MCF 10A (cell line): ENCODE measurements at regions of chr1 and their contacts with region 1.

Region 1: GRCh38 chr1:235917267-235917811 is 50.6 kb upstream of the LYST start:
- DNase-seq: peak; percentile 100
- H3K4me3 Mint-ChIP-seq: peak overlapping the region; percentile 35
- H3K27ac Mint-ChIP-seq: peak overlapping the region; percentile 81
- H3K4me1 Mint-ChIP-seq: peaks cover 55% of the 10 kb centered on the region
- H3K27me3 Mint-ChIP-seq: no peaks in the 10 kb centered on the region
- CTCF ChIP-seq: no peak

Region 2: DNA sequence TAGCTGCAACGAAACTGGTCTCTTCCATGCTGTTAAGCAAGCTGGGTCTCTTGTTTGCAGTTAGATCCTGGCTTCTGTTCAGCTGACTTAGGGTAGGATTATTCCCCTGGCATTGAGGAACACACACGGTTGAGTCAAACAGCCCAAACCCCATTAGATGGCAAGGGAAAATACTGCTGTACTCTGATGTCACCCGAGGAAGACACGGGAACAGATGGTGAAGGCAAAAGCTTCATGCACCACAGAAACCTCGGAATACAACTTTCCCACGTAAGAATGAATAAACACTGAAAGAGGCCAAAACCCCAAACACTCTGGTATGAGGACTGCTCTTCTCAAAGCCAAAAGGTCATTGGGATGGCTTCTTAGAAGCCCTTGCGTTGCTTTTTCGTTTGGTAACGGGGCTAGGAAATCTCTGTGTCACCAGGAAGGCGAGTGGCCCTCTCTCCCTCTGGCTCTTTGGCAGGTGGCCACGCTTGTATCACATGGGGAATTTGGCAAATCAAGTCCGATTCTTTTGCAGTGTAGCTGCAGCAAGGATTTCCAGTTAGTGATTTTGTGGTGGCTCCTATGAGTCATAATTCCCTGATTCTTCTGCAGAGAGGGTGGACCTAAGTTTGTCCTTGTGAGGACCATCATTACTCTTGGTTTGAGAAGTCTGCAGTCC is 33.9 kb before region 1 on chr1:
- CTCF ChIA-PET with region 1: interaction called, 3 read pairs
- POLR2A ChIA-PET with region 1: interaction called, 10 read pairs
- intact Hi-C with region 1: no loop called
- DNase-seq: peak; percentile 98
- H3K4me3 Mint-ChIP-seq: peak overlapping the region; percentile 5
- H3K27ac Mint-ChIP-seq: no peak overlapping the region
- H3K4me1 Mint-ChIP-seq: peaks cover 21% of the 10 kb centered on the region
- H3K27me3 Mint-ChIP-seq: no peaks in the 10 kb centered on the region
- CTCF ChIP-seq: no peak

Region 3: GRCh38 chr1:235902638-235903542 is 14.4 kb before region 1 on chr1:
- CTCF ChIA-PET with region 1: interaction called, 14 read pairs
- POLR2A ChIA-PET with region 1: interaction called, 130 read pairs
- intact Hi-C with region 1: no loop called
- DNase-seq: peak; percentile 99
- H3K4me3 Mint-ChIP-seq: peak overlapping the region; percentile 15
- H3K27ac Mint-ChIP-seq: peak overlapping the region; percentile 61
- H3K4me1 Mint-ChIP-seq: peaks cover 44% of the 10 kb centered on the region
- H3K27me3 Mint-ChIP-seq: no peaks in the 10 kb centered on the region
- CTCF ChIP-seq: no peak

Region 4: DNA sequence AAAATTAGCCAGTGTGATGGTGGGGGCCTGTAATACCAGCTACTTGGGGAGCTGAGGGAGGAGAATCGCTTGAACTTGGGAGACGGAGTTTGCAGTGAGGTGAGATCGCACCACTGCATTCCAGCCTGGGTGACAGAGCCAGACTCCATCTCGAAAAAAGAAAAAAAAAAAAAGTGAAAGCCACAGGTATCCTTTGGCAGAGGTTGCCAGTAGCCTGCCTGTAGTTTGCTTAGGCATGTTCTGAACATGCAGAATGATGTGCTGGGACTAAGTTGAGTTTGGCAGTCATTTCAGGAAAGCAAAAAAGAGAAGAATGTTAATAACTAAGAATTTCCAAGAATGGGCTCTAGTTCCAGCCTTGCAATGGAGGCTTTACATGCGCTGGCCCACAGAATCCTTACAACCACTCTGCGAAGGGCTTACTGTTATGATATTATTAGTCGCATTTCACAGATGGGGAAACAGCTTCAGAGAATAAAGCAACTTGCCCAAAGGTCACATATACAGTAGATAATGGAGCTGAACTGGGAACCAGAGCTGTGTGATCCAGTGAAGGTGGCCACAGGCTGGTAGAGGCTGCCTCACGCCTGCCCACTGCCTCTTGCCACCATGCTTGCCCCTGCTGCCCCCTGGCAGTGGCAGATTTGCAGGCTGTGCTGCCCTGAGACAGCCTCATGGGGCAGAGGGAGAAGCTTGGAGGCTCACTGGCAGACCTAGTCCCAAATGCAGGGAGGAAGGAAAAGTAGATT is 15.9 kb after region 1 on chr1:
- CTCF ChIA-PET with region 1: interaction called, 112 read pairs
- POLR2A ChIA-PET with region 1: interaction called, 308 read pairs
- intact Hi-C with region 1: no loop called
- DNase-seq: peak; percentile 67
- H3K4me3 Mint-ChIP-seq: peak overlapping the region; percentile 18
- H3K27ac Mint-ChIP-seq: peak overlapping the region; percentile 52
- H3K4me1 Mint-ChIP-seq: peaks cover 51% of the 10 kb centered on the region
- H3K27me3 Mint-ChIP-seq: no peaks in the 10 kb centered on the region
- CTCF ChIP-seq: no peak

Region 5: GRCh38 chr1:235938709-235939479 is 21.6 kb after region 1 on chr1:
- CTCF ChIA-PET with region 1: interaction called, 112 read pairs
- POLR2A ChIA-PET with region 1: interaction called, 308 read pairs
- intact Hi-C with region 1: loop called (anchors 1 kb)
- DNase-seq: no peak
- H3K4me3 Mint-ChIP-seq: no peak overlapping the region
- H3K27ac Mint-ChIP-seq: no peak overlapping the region
- H3K4me1 Mint-ChIP-seq: peaks cover 44% of the 10 kb centered on the region
- H3K27me3 Mint-ChIP-seq: no peaks in the 10 kb centered on the region
- CTCF ChIP-seq: no peak

Region 6: DNA sequence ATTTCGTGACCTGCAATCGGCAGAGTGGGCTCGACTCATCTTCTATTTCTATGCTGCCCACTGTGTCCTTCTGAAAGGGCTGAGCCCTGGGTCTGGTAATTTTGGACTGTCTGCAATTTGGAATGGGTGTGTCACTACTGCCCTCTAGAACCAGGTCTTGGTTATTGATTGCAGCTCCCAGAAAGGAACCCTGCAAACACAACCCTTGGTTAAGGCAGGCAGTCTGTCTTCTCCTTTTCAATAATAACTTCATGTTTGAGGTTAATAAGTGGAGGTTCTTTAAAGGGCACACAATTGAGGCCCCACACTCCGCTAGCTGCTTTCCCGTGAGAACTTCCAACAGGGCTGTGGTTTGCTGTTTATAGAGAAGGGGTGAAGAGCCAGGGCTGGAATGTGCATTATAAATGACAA is 29.2 kb after region 1 on chr1:
- CTCF ChIA-PET with region 1: interaction called, 58 read pairs
- POLR2A ChIA-PET with region 1: interaction called, 23 read pairs
- intact Hi-C with region 1: loop called (anchors 1 kb)
- DNase-seq: peak; percentile 77
- H3K4me3 Mint-ChIP-seq: no peak overlapping the region
- H3K27ac Mint-ChIP-seq: no peak overlapping the region
- H3K4me1 Mint-ChIP-seq: peaks cover 47% of the 10 kb centered on the region
- H3K27me3 Mint-ChIP-seq: no peaks in the 10 kb centered on the region
- CTCF ChIP-seq: peak; percentile 75